Heart right ventricle (tissue), 16 donors: ENCODE measurements at regions of chr10 and their contacts with region 1.

Region 1: GRCh38 chr10:101031128-101031795 is at the starts of genes PDZD7 and SFXN3:
- DNase-seq: peak; percentile 98 to 99
- ATAC-seq: peak; percentile 85 to 93 (median 91)
- H3K4me3 ChIP-seq: peak within 1 kb of the TSS; percentile 70 to 83 (median 77)
- H3K27ac ChIP-seq: peak within 1 kb of the TSS; percentile 93 to 99 (median 98)
- H3K4me1 ChIP-seq: peaks cover 10 to 34% (median 26%) of the 10 kb centered on the region in 9 donors
- H3K27me3 ChIP-seq: no peaks in the 10 kb centered on the region
- CTCF ChIP-seq: no peak
- total RNA-seq, gene PDZD7: 0.17 to 0.60 (median 0.22) TPM in 9 of 10 donors, not detected in the other
- total RNA-seq, gene SFXN3: 8.4 to 25.7 (median 14.2) TPM

Region 2: GRCh38 chr10:100986952-100987750 is 44.1 kb before region 1 on chr10 and contains the starts of genes MRPL43 and TWNK:
- intact Hi-C with region 1: loop called in 2 of 10 experiments (anchors 5 kb)
- DNase-seq: peak; percentile 85
- ATAC-seq: peak; percentile 84 to 94 (median 92)
- H3K4me3 ChIP-seq: peak within 1 kb of the TSS; percentile 63 to 99 (median 84)
- H3K27ac ChIP-seq: peak within 1 kb of the TSS in 9 of 10 donors; percentile 76 to 90 (median 83)
- H3K4me1 ChIP-seq: peaks cover 12 to 34% (median 25%) of the 10 kb centered on the region in 9 donors
- H3K27me3 ChIP-seq: no peaks in the 10 kb centered on the region
- CTCF ChIP-seq: no peak
- total RNA-seq, gene MRPL43: 43.8 to 73.4 (median 55.2) TPM
- total RNA-seq, gene TWNK: 4.7 to 7.7 (median 5.4) TPM

Region 3: GRCh38 chr10:100998991-100999741 is 32.1 kb before region 1 on chr10:
- intact Hi-C with region 1: loop called in 1 of 10 experiments (anchors 5 kb)
- DNase-seq: peak; percentile 84 to 88
- ATAC-seq: peak; percentile 62 to 79 (median 72)
- H3K4me3 ChIP-seq: peak overlapping the region; percentile 61 to 93 (median 85)
- H3K27ac ChIP-seq: peak overlapping the region; percentile 98 to 100 (median 100)
- H3K4me1 ChIP-seq: peaks cover 16 to 67% (median 58%) of the 10 kb centered on the region in 9 donors
- H3K27me3 ChIP-seq: no peaks in the 10 kb centered on the region
- CTCF ChIP-seq: peak; percentile 94 to 99 (median 97)